MCF 10A (cell line): ENCODE measurements at regions of chr17 and their contacts with region 1.

Region 1: GRCh38 chr17:38322091-38322779 is 21.5 kb downstream of the GPR179 start:
- DNase-seq: peak; percentile 68
- H3K4me3 Mint-ChIP-seq: no peak overlapping the region
- H3K27ac Mint-ChIP-seq: no peak overlapping the region
- H3K4me1 Mint-ChIP-seq: peaks cover 7% of the 10 kb centered on the region
- H3K27me3 Mint-ChIP-seq: peaks cover 8% of the 10 kb centered on the region
- CTCF ChIP-seq: peak; percentile 67

Region 2: GRCh38 chr17:38333635-38334295 is 11.5 kb after region 1 on chr17:
- CTCF ChIA-PET with region 1: interaction called, 49 read pairs
- POLR2A ChIA-PET with region 1: interaction called, 3 read pairs
- intact Hi-C with region 1: no loop called
- DNase-seq: peak; percentile 54
- H3K4me3 Mint-ChIP-seq: no peak overlapping the region
- H3K27ac Mint-ChIP-seq: peak overlapping the region; percentile 3
- H3K4me1 Mint-ChIP-seq: peaks cover 3% of the 10 kb centered on the region
- H3K27me3 Mint-ChIP-seq: peaks cover 12% of the 10 kb centered on the region
- CTCF ChIP-seq: peak; percentile 73

Region 3: DNA sequence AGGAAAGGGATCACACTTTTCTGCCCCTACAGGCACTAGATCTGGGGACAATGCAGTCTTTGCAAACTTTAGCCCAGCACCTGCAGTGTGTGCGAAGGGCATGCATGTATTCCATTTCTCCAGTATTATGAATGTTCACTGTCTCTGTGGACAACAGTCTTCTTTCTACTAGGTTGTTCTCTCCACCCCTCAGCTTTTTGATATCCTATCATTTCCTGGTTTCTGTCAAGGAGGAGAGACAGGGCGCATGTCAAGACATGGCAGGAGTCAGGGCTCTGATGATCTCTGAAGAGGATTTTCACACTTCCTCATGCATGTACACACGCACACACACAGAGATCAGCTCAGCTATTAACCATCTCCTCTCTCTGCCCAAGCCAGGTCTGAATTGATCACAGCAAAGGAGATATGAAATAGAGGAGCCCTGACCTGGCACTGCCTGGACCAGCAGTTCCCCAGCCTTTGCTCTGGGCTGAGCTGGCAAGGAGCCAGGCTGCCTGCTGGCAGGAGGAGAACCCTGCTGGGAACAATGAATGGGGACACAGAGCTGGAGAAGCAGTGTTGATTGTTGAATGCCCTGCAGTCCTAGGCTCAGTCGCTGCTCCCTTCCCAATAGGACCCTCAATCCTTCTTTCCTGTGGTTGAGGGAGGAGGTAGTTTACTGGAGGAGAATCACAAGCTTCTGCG is 18.9 kb after region 1 on chr17:
- CTCF ChIA-PET with region 1: interaction called, 14 read pairs
- POLR2A ChIA-PET with region 1: no interaction called
- intact Hi-C with region 1: no loop called
- DNase-seq: peak; percentile 44
- H3K4me3 Mint-ChIP-seq: no peak overlapping the region
- H3K27ac Mint-ChIP-seq: no peak overlapping the region
- H3K4me1 Mint-ChIP-seq: no peaks in the 10 kb centered on the region
- H3K27me3 Mint-ChIP-seq: peaks cover 10% of the 10 kb centered on the region
- CTCF ChIP-seq: no peak

Region 4: DNA sequence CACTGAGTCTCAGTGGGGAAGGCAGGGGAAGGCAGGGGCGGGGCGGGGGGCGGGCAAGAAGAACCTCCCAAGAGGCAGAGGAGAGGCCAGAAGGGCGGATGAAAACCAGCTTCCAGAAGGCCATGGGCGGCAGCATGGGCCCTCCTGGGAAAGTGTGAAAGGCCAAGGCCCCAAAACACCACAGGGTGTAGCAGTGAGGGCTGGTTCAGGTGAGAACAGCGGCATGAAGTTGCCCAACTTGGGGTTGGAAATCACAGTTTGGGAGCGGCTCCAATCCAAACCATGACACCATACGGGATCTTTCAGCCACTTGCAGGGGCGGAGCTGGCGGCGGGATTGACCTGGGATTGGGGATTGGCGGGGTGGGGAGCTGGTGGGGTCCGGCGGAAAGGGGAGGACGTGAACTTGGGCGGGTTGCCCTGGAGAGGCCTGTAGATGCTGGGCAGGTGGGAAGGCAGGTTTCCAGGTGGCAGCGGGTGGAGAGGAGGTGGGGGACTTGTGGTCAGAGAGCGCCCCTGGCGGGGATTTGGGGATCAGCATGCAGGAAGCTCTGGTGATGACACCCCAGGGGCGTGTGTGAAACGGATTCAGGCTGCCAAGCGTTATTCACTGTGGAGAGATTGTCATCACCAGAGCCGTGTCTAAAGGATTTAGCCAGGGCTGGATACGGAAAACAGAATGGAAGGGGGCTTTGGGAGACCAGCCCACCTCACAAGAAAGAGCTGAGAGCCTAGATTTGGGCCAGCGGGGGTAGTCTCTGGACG is 187.0 kb after region 1 on chr17:
- CTCF ChIA-PET with region 1: no interaction called
- POLR2A ChIA-PET with region 1: no interaction called
- intact Hi-C with region 1: no loop called
- DNase-seq: peak; percentile 60
- H3K4me3 Mint-ChIP-seq: no peak overlapping the region
- H3K27ac Mint-ChIP-seq: no peak overlapping the region
- H3K4me1 Mint-ChIP-seq: peaks cover 7% of the 10 kb centered on the region
- H3K27me3 Mint-ChIP-seq: peaks cover 9% of the 10 kb centered on the region
- CTCF ChIP-seq: peak; percentile 52